ENCODE measurements at regions of chr2 and their contacts with region 1.

Region 1: GRCh38 chr2:97095661-97096060 is 979 bp upstream of the FAHD2B start:
- H3K4me3 Mint-ChIP-seq: no peak overlapping the region
- H3K27ac Mint-ChIP-seq: no peak overlapping the region
- H3K4me1 Mint-ChIP-seq: peaks cover 10% of the 10 kb centered on the region
- H3K27me3 Mint-ChIP-seq: peaks cover 22% of the 10 kb centered on the region

Region 2: GRCh38 chr2:97011977-97012565 is 83.6 kb before region 1 on chr2:
- intact Hi-C with region 1: loop called (anchors 10 kb)
- H3K4me3 Mint-ChIP-seq: no peak overlapping the region
- H3K27ac Mint-ChIP-seq: no peak overlapping the region
- H3K4me1 Mint-ChIP-seq: no peaks in the 10 kb centered on the region
- H3K27me3 Mint-ChIP-seq: peaks cover 14% of the 10 kb centered on the region

Region 3: GRCh38 chr2:98280376-98281102 is 1184.9 kb after region 1 on chr2:
- intact Hi-C with region 1: no loop called
- H3K4me3 Mint-ChIP-seq: no peak overlapping the region
- H3K27ac Mint-ChIP-seq: no peak overlapping the region
- H3K4me1 Mint-ChIP-seq: no peaks in the 10 kb centered on the region
- H3K27me3 Mint-ChIP-seq: peaks cover 57% of the 10 kb centered on the region